Activated naive CD4-positive, alpha-beta T cell treated with anti-CD3 and anti-CD28 coated beads for 36 hours (primary cell): ENCODE measurements at regions of chr2 and their contacts with region 1.

Region 1: DNA sequence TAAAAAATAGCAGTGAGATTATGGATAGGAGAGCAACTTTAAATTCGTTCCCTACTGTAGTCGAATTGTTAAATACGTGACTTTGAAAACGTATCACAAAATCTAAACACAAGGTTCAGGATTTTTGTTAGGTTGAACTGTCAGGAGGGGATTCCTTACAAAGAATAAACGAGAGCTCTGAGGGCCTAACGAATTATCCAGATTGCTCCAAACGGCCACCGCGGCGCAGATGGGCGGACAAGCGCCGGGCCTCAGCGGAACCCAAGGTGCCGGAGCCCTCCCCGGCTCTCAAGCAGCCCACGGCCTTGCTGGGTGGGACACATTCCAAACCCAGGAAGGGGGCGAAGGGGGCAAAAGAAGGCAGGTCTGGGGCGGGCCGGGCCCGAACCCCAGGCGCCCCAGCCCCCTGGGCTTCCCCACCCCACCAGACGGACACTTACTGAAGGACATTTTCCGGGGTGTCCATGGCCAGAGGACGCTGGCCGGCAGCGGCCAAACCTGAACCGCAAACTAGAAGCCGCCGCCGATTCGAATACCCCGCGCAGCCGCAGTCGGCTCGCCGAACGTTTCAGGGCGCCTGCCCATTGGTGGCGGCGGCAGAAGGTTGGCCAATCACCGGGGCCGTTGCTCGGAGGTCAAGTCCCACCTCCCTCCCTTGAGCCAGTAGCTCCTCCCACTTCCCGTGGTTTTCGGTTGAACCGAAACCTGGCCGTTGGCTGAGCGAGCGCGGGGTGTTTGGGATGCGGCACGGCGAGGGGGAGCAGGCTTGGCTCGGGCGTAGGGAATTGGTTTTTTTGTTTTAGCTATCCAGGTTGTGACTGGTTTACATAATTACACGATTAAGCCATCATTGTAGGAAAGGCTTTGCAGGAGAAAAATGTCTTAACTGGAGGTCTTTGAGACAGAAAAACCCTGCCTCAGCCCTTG is at the start of gene BUB1:
- DNase-seq: peak; percentile 98
- H3K4me3 Mint-ChIP-seq: peak within 1 kb of the TSS; percentile 92
- H3K27ac Mint-ChIP-seq: peak within 1 kb of the TSS; percentile 93
- H3K4me1 Mint-ChIP-seq: peaks cover 17% of the 10 kb centered on the region
- H3K27me3 Mint-ChIP-seq: no peaks in the 10 kb centered on the region
- total RNA-seq, gene BUB1: 103 to 107 TPM

Region 2: DNA sequence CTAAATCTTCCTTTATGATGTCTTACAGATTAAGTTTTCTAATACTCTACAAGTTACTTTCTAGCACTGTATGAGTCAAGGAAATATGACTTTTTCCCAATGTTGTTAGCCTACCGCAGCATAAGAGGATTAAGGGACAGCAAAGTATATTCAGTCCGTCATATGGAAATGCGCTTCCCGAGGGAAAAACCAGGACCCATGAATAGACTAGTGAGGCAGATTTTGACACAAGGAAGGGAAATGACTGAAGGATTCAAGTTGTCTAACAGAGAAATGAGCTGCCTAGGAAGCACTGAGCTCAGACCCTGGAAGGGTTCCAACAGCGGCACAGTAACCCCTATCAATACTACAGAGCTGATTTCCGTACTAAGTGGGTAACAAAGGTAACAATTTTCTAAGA is 1076.0 kb before region 1 on chr2:
- CTCF ChIA-PET with region 1: no interaction called
- intact Hi-C with region 1: no loop called
- DNase-seq: no peak
- H3K4me3 Mint-ChIP-seq: no peak overlapping the region
- H3K27ac Mint-ChIP-seq: no peak overlapping the region
- H3K4me1 Mint-ChIP-seq: no peaks in the 10 kb centered on the region
- H3K27me3 Mint-ChIP-seq: peaks cover 19% of the 10 kb centered on the region

Region 3: GRCh38 chr2:110748489-110748867 is 70.7 kb after region 1 on chr2:
- CTCF ChIA-PET with region 1: no interaction called
- intact Hi-C with region 1: loop called (anchors 2 kb)
- DNase-seq: peak; percentile 83
- H3K4me3 Mint-ChIP-seq: no peak overlapping the region
- H3K27ac Mint-ChIP-seq: no peak overlapping the region
- H3K4me1 Mint-ChIP-seq: peaks cover 17% of the 10 kb centered on the region
- H3K27me3 Mint-ChIP-seq: peaks cover 70% of the 10 kb centered on the region

Region 4: GRCh38 chr2:110755491-110756078 is 77.8 kb after region 1 on chr2:
- CTCF ChIA-PET with region 1: interaction called, 10 read pairs
- intact Hi-C with region 1: no loop called
- DNase-seq: no peak
- H3K4me3 Mint-ChIP-seq: no peak overlapping the region
- H3K27ac Mint-ChIP-seq: no peak overlapping the region
- H3K4me1 Mint-ChIP-seq: no peaks in the 10 kb centered on the region
- H3K27me3 Mint-ChIP-seq: peaks cover 32% of the 10 kb centered on the region

Region 5: DNA sequence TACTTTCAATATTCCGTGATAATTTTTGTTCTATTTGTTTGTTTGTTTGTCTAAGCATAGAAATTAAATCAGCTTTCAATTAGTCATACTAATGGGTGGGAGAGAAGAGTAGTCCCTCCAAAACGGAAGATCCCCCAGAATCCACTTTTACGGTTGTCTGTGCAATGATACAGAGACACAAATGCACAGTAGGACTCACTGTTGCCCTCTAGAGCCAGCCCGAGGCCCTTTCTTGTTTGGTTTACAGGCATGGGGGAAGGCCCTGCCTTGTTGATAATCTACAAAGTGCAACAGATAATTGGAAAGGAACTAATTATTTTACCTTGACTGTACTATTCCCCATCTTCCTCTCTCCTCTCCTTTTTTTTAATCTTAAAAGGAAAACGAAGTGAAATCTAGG is 175.7 kb after region 1 on chr2:
- CTCF ChIA-PET with region 1: no interaction called
- intact Hi-C with region 1: loop called (anchors 2 kb)
- DNase-seq: peak; percentile 78
- H3K4me3 Mint-ChIP-seq: no peak overlapping the region
- H3K27ac Mint-ChIP-seq: no peak overlapping the region
- H3K4me1 Mint-ChIP-seq: peaks cover 36% of the 10 kb centered on the region
- H3K27me3 Mint-ChIP-seq: peaks cover 44% of the 10 kb centered on the region